HCT116 (cell line): ENCODE measurements at regions of chr2 and their contacts with region 1.

Region 1: GRCh38 chr2:215002500-215002899 is 135.9 kb downstream of the ABCA12 start:
- DNase-seq: peak; percentile 31
- ATAC-seq: peak; percentile 74
- H3K4me3 ChIP-seq: no peak overlapping the region
- H3K27ac ChIP-seq: no peak overlapping the region
- H3K4me1 ChIP-seq: peaks cover 0 to 2% of the 10 kb centered on the region in 2 experiments; a peak in 2 of 4 replicates
- H3K27me3 ChIP-seq: no peaks in the 10 kb centered on the region
- CTCF ChIP-seq: peak; percentile 45 to 76 (median 62); a peak in 5 of 6 replicates
- POLR2A ChIP-seq: no peak
- RAD21 ChIP-seq: peak; percentile 72

Region 2: GRCh38 chr2:213806125-213806726 is 1196.3 kb before region 1 on chr2:
- CTCF ChIA-PET with region 1: no interaction called
- POLR2A ChIA-PET with region 1: no interaction called
- RAD21 ChIA-PET with region 1: no interaction called
- intact Hi-C with region 1: loop called (anchors 2 kb)
- DNase-seq: no peak
- ATAC-seq: no peak
- H3K4me3 ChIP-seq: no peak overlapping the region
- H3K27ac ChIP-seq: no peak overlapping the region
- H3K4me1 ChIP-seq: no peaks in the 10 kb centered on the region
- H3K27me3 ChIP-seq: no peaks in the 10 kb centered on the region
- CTCF ChIP-seq: peak in 2 of 3 experiments; percentile 44 to 57; a peak in 3 of 6 replicates
- POLR2A ChIP-seq: no peak
- RAD21 ChIP-seq: peak; percentile 66

Region 3: DNA sequence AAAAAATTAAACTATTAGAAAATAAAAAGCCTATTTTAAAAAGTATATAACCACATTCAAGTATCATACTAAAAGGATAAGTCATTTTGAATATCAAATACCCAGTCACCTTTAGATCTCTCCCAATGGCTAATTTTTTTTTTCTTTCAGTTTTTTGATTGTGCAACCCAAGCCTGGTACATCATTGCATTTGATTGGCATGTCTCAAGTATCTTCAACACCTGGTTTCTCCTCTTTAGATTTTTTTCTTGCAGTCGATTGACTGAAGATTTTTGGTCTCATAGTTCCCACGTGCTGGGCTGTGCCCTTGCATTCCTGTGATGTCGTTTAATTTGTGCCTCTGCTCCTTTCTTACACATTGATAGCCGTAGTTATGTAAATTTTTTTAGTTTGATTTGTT is 350.1 kb after region 1 on chr2:
- CTCF ChIA-PET with region 1: no interaction called
- POLR2A ChIA-PET with region 1: no interaction called
- RAD21 ChIA-PET with region 1: no interaction called
- intact Hi-C with region 1: no loop called
- DNase-seq: no peak
- ATAC-seq: no peak
- H3K4me3 ChIP-seq: no peak overlapping the region
- H3K27ac ChIP-seq: no peak overlapping the region
- H3K4me1 ChIP-seq: no peaks in the 10 kb centered on the region
- H3K27me3 ChIP-seq: no peaks in the 10 kb centered on the region
- CTCF ChIP-seq: no peak
- POLR2A ChIP-seq: no peak
- RAD21 ChIP-seq: no peak